PC-9 (cell line): ENCODE measurements at regions of chr5 and their contacts with region 1.

Region 1: GRCh38 chr5:83294246-83294645 is 177.3 kb upstream of the VCAN start:
- DNase-seq: no peak
- H3K4me3 ChIP-seq: no peak overlapping the region
- H3K27ac ChIP-seq: no peak overlapping the region
- H3K4me1 ChIP-seq: no peaks in the 10 kb centered on the region
- H3K27me3 ChIP-seq: no peaks in the 10 kb centered on the region
- CTCF ChIP-seq: no peak

Region 2: GRCh38 chr5:83306572-83307241 is 12.5 kb after region 1 on chr5:
- CTCF ChIA-PET with region 1: no interaction called
- POLR2A ChIA-PET with region 1: no interaction called
- intact Hi-C with region 1: loop called (anchors 1 kb)
- DNase-seq: no peak
- H3K4me3 ChIP-seq: no peak overlapping the region
- H3K27ac ChIP-seq: no peak overlapping the region
- H3K4me1 ChIP-seq: no peaks in the 10 kb centered on the region
- H3K27me3 ChIP-seq: no peaks in the 10 kb centered on the region
- CTCF ChIP-seq: no peak

Region 3: GRCh38 chr5:83414601-83415000 is 120.4 kb after region 1 on chr5:
- CTCF ChIA-PET with region 1: no interaction called
- POLR2A ChIA-PET with region 1: no interaction called
- intact Hi-C with region 1: no loop called
- DNase-seq: no peak
- H3K4me3 ChIP-seq: no peak overlapping the region
- H3K27ac ChIP-seq: no peak overlapping the region
- H3K4me1 ChIP-seq: no peaks in the 10 kb centered on the region
- H3K27me3 ChIP-seq: no peaks in the 10 kb centered on the region
- CTCF ChIP-seq: no peak